Panc1 (cell line): ENCODE measurements at regions of chr7 and their contacts with region 1.

Region 1: GRCh38 chr7:132269718-132270117 is 306.6 kb downstream of the PLXNA4 start:
- DNase-seq: no peak
- ATAC-seq: no peak
- H3K4me3 ChIP-seq: no peak overlapping the region
- H3K27ac ChIP-seq: no peak overlapping the region
- H3K4me1 ChIP-seq: no peaks in the 10 kb centered on the region
- H3K27me3 ChIP-seq: peaks cover 3% of the 10 kb centered on the region; the same call in 1 of the 2 replicates
- CTCF ChIP-seq: no peak

Region 2: GRCh38 chr7:132239422-132239994 is 30.2 kb before region 1 on chr7:
- CTCF ChIA-PET with region 1: no interaction called
- POLR2A ChIA-PET with region 1: no interaction called
- in situ Hi-C with region 1: no loop called
- intact Hi-C with region 1: no loop called
- DNase-seq: no peak
- ATAC-seq: no peak
- H3K4me3 ChIP-seq: no peak overlapping the region
- H3K27ac ChIP-seq: no peak overlapping the region
- H3K4me1 ChIP-seq: no peaks in the 10 kb centered on the region
- H3K27me3 ChIP-seq: peaks cover 9% of the 10 kb centered on the region
- CTCF ChIP-seq: no peak

Region 3: GRCh38 chr7:132296820-132297219 is 27.1 kb after region 1 on chr7:
- CTCF ChIA-PET with region 1: interaction called, 11 read pairs
- POLR2A ChIA-PET with region 1: no interaction called
- in situ Hi-C with region 1: no loop called
- intact Hi-C with region 1: no loop called
- DNase-seq: no peak
- ATAC-seq: no peak
- H3K4me3 ChIP-seq: no peak overlapping the region
- H3K27ac ChIP-seq: no peak overlapping the region
- H3K4me1 ChIP-seq: no peaks in the 10 kb centered on the region
- H3K27me3 ChIP-seq: no peaks in the 10 kb centered on the region; the same call in 1 of the 2 replicates
- CTCF ChIP-seq: no peak